A549 (cell line): ENCODE measurements at regions of chr16 and their contacts with region 1.

Region 1: GRCh38 chr16:19167710-19168370 is at the start of gene SYT17:
- DNase-seq: peak; percentile 80 to 90
- ATAC-seq: peak; percentile 94 to 95
- H3K4me3 ChIP-seq: peak within 1 kb of the TSS; percentile 84
- H3K27ac ChIP-seq: peak within 1 kb of the TSS; percentile 91 to 96
- H3K4me1 ChIP-seq: peaks cover 26% of the 10 kb centered on the region
- CTCF ChIP-seq: peak; percentile 97
- EP300 ChIP-seq: no peak
- POLR2A ChIP-seq: peak; percentile 36; the same call in 1 of the 2 replicates
- RAD21 ChIP-seq: peak; percentile 80 to 96
- polyA plus RNA-seq, gene SYT17: 18.7 and 28.1 TPM in 2 replicates

Region 2: DNA sequence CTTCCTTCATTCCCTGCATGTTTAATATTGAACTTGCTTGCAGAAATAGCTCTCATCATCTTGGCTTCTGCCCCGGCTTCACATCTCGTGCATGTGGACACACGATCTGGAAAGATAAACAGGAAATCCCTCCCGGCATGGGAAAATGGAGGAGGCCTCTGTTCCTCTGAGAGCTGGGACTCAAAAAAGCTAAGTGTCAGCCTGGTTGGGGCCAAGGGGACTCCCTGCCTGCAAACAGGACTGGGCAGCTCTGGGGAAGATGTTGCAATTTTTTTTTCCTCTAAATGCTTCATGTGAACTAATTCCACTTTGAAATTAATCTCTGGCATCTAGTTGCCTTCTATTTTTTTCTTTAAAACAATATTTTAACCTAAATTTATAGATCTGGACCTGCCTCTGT is 29.2 kb before region 1 on chr16:
- CTCF ChIA-PET with region 1: interaction called, 10 read pairs
- POLR2A ChIA-PET with region 1: no interaction called
- DNase-seq: peak; percentile 60 to 84
- ATAC-seq: peak; percentile 40 to 64; a peak in 4 of 6 replicates
- H3K4me3 ChIP-seq: no peak overlapping the region
- H3K27ac ChIP-seq: peak overlapping the region; percentile 76 to 85
- H3K4me1 ChIP-seq: peaks cover 60% of the 10 kb centered on the region
- CTCF ChIP-seq: no peak
- EP300 ChIP-seq: no peak
- POLR2A ChIP-seq: no peak
- RAD21 ChIP-seq: no peak

Region 3: GRCh38 chr16:19316846-19317245 is 149.0 kb after region 1 on chr16:
- CTCF ChIA-PET with region 1: no interaction called
- POLR2A ChIA-PET with region 1: no interaction called
- DNase-seq: no peak
- ATAC-seq: no peak
- H3K4me3 ChIP-seq: no peak overlapping the region
- H3K27ac ChIP-seq: no peak overlapping the region
- H3K4me1 ChIP-seq: no peaks in the 10 kb centered on the region
- CTCF ChIP-seq: no peak
- EP300 ChIP-seq: no peak
- POLR2A ChIP-seq: no peak
- RAD21 ChIP-seq: no peak